ENCODE measurements at regions of chr1 and their contacts with region 1.

Region 1: DNA sequence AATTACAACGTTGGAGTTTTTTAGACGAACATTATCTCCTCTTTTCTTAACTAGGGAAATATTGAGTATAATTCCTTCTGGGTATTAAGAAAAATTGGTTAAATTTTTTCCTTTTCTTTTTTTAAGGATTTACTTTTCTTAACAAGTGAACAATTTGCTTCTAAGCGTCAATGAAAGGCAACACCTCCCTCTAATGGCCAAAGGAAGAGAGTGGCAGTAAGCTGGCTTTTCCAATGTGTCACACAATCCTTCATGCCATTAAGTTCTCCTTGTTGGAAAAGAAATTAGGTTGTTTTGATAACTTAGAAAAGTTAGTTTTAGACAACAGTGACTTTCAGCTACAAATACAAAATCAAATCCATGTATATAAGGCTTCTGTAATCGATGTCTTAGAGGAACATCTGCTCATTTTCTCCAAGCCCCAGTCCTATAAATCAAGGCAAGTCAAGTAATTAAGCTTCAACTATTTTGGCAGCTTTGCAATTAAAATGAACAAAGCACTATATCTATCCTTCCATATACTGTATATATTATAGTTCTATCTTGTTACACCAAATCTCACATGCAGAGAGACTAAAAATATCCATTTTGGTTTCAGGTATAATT is 62.8 kb downstream of the EDEM3 start:
- DNase-seq: no peak
- H3K4me3 ChIP-seq: no peak overlapping the region
- H3K27ac ChIP-seq: no peak overlapping the region
- H3K4me1 ChIP-seq: no peaks in the 10 kb centered on the region
- H3K27me3 ChIP-seq: no peaks in the 10 kb centered on the region
- CTCF ChIP-seq: peak; percentile 11 to 81 (median 73)
- EP300 ChIP-seq: no peak
- POLR2A ChIP-seq: no peak

Region 2: DNA sequence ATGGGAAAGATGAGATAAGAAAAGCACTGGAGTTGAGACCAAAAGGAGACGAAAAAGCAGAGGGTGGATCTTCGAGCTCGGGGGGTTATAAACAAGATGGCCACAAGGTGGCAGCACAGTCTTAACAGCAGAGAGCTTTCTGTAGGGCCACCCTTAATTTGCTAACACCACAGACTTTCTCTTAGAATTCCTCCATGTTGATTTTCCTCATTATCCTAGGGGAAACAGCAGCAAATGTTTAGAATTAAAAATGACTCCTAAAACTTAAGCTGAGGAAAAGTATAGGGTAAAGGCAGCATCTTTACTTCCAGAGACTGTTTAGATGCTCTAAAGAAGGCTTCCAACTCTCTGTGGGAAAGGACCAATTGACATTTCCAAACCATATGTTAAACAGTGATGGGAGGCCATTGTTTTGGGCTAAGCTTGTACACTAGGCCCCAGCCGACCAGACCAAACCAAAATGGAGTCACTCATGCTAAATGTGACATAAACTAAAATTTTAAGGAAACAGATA is 1036.2 kb before region 1 on chr1:
- intact Hi-C with region 1: loop called (anchors 10 kb)
- DNase-seq: peak; percentile 91
- H3K4me3 ChIP-seq: no peak overlapping the region
- H3K27ac ChIP-seq: no peak overlapping the region
- H3K4me1 ChIP-seq: peaks cover 0 to 26% (median 12%) of the 10 kb centered on the region in 4 donors
- H3K27me3 ChIP-seq: no peaks in the 10 kb centered on the region
- CTCF ChIP-seq: peak; percentile 76 to 90 (median 84)
- EP300 ChIP-seq: no peak
- POLR2A ChIP-seq: no peak

Region 3: DNA sequence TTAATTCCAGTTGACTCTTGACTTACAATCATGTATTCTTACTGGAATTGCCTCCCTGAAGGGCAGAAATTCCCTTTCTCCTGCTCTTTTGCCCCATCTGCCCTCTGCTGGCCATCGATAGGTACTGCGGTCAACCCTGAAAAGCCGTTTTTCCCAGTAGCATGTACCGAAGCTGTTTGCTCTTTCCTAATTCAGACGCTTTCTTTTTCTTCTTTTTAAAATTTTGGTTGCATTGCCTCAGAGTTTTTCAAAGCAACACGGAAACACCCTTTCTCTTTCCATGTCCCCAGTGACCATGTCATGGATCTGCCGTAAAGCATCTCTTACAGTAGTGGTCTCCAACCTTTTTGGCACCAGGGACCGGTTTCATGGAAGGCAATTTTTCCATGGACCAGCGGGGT is 469.2 kb before region 1 on chr1:
- intact Hi-C with region 1: loop called (anchors 5 kb)
- DNase-seq: peak; percentile 70
- H3K4me3 ChIP-seq: peak overlapping the region in 1 of 4 donors; percentile 8
- H3K27ac ChIP-seq: no peak overlapping the region
- H3K4me1 ChIP-seq: peaks cover 0 to 6% (median 2%) of the 10 kb centered on the region in 4 donors
- H3K27me3 ChIP-seq: no peaks in the 10 kb centered on the region
- CTCF ChIP-seq: peak; percentile 77 to 96 (median 92)
- EP300 ChIP-seq: no peak
- POLR2A ChIP-seq: no peak